Activated naive CD4-positive, alpha-beta T cell treated with anti-CD3 and anti-CD28 coated beads for 36 hours (primary cell): ENCODE measurements at regions of chr2 and their contacts with region 1.

Region 1: GRCh38 chr2:127479219-127479825 is 47.0 kb downstream of the IWS1 start:
- DNase-seq: no peak
- H3K4me3 Mint-ChIP-seq: no peak overlapping the region
- H3K27ac Mint-ChIP-seq: no peak overlapping the region
- H3K4me1 Mint-ChIP-seq: no peaks in the 10 kb centered on the region
- H3K27me3 Mint-ChIP-seq: no peaks in the 10 kb centered on the region

Region 2: DNA sequence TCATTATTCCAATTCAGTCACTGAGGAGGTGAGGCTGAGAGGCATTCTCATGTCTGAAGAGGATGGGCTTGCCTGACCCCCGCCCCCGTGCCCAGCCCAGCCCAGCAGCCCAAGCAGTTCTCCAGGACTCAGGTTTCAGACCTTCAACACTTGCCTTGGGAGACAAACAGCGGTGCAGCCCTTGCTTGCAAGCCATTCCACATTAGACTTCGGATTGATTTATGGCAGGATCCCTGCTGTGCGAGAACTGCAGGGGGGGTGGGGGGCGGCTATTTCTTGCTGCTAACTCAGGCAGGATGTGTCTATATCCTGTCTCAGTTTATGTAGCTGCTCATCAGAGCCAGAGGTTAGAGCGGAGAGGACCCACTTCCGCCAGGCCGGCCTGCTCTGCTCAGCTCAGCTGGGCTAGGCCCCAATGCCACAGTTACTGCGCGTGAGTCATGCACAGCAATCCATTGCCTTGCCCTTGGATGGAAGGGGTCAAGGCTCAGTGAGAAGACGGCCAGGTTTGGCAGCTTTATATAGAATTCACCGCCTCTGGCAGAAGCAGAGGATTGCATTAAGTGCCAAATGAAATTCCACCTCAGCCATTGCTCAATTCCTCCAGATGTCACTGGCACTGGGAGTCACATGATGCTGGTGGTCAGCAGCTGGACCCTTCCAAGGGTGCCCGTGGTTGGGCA is 821.5 kb before region 1 on chr2:
- CTCF ChIA-PET with region 1: no interaction called
- intact Hi-C with region 1: no loop called
- DNase-seq: peak; percentile 87
- H3K4me3 Mint-ChIP-seq: peak overlapping the region; percentile 100
- H3K27ac Mint-ChIP-seq: peak overlapping the region; percentile 100
- H3K4me1 Mint-ChIP-seq: peaks cover 61% of the 10 kb centered on the region
- H3K27me3 Mint-ChIP-seq: no peaks in the 10 kb centered on the region

Region 3: GRCh38 chr2:127197475-127198385 is 281.6 kb before region 1 on chr2:
- CTCF ChIA-PET with region 1: interaction called, 18 read pairs
- intact Hi-C with region 1: loop called (anchors 1 kb)
- DNase-seq: peak; percentile 80
- H3K4me3 Mint-ChIP-seq: peak overlapping the region; percentile 69
- H3K27ac Mint-ChIP-seq: no peak overlapping the region
- H3K4me1 Mint-ChIP-seq: peaks cover 5% of the 10 kb centered on the region
- H3K27me3 Mint-ChIP-seq: no peaks in the 10 kb centered on the region

Region 4: GRCh38 chr2:127324635-127325034 is 154.7 kb before region 1 on chr2:
- CTCF ChIA-PET with region 1: interaction called, 20 read pairs
- intact Hi-C with region 1: loop called (anchors 1 kb)
- DNase-seq: no peak
- H3K4me3 Mint-ChIP-seq: no peak overlapping the region
- H3K27ac Mint-ChIP-seq: no peak overlapping the region
- H3K4me1 Mint-ChIP-seq: peaks cover 6% of the 10 kb centered on the region
- H3K27me3 Mint-ChIP-seq: no peaks in the 10 kb centered on the region

Region 5: GRCh38 chr2:127355386-127356008 is 123.8 kb before region 1 on chr2:
- CTCF ChIA-PET with region 1: interaction called, 4 read pairs
- intact Hi-C with region 1: loop called (anchors 1 kb)
- DNase-seq: peak; percentile 35
- H3K4me3 Mint-ChIP-seq: no peak overlapping the region
- H3K27ac Mint-ChIP-seq: no peak overlapping the region
- H3K4me1 Mint-ChIP-seq: peaks cover 46% of the 10 kb centered on the region
- H3K27me3 Mint-ChIP-seq: no peaks in the 10 kb centered on the region

Region 6: DNA sequence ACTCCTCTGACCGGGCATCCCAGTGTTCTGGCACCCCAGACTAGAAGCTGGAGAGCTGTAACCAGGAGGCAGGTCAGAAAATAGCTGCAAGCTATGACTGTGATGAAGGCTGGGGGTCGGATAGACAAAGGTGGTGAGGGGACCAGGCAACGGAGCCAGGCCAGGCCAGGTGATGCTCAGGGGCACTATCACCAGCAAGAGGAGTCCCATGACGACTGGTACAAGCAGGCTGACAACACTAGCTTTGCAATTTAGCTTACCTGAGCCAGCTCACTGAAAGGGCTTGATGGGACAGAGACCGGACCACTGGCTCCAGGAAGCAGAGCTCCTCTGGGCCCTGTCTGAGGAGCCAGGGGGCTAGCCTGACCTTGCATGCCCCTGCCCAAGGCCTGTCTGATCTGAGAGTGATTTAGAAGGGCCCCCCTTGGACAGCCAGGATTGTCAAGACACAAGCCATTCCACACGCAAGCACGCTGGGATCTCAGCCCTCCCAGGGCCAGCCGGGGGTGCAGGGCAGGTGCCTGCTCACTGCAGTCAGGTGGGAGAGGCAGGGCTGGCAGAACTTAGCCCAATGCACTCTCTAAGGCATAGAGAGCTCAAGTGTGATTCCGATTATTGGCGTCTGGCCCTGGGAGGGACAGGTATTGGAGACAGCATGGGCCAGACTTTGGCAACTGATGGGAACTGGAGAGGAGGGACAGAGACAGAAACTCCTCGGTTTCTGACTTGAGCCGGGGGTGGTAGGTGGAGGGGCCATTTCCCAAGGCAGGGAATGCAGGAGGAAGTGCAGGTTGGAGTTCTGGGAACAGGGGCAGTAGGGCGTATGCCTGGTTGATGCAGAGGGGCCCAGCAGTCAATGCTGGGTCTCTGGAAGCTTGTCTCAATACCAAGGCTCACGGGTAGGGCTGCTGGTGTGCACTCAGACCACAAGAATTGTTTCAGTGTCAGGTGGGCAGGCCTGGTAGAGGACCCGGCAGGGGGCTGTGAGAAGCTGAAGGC is 103.8 kb after region 1 on chr2:
- CTCF ChIA-PET with region 1: no interaction called
- intact Hi-C with region 1: no loop called
- DNase-seq: no peak
- H3K4me3 Mint-ChIP-seq: no peak overlapping the region
- H3K27ac Mint-ChIP-seq: no peak overlapping the region
- H3K4me1 Mint-ChIP-seq: no peaks in the 10 kb centered on the region
- H3K27me3 Mint-ChIP-seq: no peaks in the 10 kb centered on the region

Region 7: DNA sequence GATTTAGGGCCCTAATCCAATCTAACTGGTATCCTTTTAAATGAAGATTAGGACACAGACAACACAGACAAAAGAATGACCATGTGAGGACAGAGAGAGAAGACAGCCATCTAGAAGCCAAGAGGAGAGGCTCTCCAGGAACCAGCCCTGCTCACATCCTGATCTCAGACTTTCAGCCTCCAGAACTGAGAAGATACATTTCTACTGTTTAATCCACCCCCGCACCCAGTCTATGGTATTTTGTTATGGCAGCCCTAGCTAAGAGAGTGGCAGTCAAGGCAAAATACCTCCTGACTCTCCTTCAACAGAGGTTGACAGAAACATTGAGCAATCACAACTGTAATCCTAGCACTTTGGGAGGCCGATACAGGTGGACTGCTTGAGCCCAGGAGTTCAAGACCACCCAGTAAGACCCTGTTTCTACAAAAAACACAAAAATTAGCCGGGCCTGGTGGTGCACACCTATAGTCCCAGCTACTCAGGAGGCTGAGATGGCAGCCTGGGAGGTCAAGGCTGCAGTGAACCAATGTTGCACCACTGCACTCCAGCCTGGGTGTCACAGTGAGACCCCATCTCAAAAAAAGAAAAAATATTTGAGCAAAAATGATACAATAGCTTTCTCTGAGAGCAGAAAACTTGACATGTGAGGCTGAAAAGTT is 296.9 kb after region 1 on chr2:
- CTCF ChIA-PET with region 1: no interaction called
- intact Hi-C with region 1: no loop called
- DNase-seq: no peak
- H3K4me3 Mint-ChIP-seq: no peak overlapping the region
- H3K27ac Mint-ChIP-seq: no peak overlapping the region
- H3K4me1 Mint-ChIP-seq: peaks cover 50% of the 10 kb centered on the region
- H3K27me3 Mint-ChIP-seq: no peaks in the 10 kb centered on the region